Activated T-helper 2 cell treated with anti-CD3 and anti-CD28 coated beads, Interferon-gamma antibody, Interleukin-2, Interleukin-4, amounts not matched to agents 10 μg/mL and 5 μg/mL and 100 μg/mL, durations not matched to agents 14 hours and 24 hours and 36 hours (primary cell): ENCODE measurements at regions of chr17 and their contacts with region 1.

Region 1: GRCh38 chr17:75515496-75516254 is at the start of gene CASKIN2:
- DNase-seq: peak; percentile 70
- H3K4me3 Mint-ChIP-seq: peak within 1 kb of the TSS; percentile 72
- H3K27ac Mint-ChIP-seq: no peak within 1 kb of the TSS
- H3K4me1 Mint-ChIP-seq: peaks cover 23% of the 10 kb centered on the region
- H3K27me3 Mint-ChIP-seq: peaks cover 5% of the 10 kb centered on the region
- total RNA-seq, gene CASKIN2: 2.2 and 2.3 TPM in 2 replicates

Region 2: DNA sequence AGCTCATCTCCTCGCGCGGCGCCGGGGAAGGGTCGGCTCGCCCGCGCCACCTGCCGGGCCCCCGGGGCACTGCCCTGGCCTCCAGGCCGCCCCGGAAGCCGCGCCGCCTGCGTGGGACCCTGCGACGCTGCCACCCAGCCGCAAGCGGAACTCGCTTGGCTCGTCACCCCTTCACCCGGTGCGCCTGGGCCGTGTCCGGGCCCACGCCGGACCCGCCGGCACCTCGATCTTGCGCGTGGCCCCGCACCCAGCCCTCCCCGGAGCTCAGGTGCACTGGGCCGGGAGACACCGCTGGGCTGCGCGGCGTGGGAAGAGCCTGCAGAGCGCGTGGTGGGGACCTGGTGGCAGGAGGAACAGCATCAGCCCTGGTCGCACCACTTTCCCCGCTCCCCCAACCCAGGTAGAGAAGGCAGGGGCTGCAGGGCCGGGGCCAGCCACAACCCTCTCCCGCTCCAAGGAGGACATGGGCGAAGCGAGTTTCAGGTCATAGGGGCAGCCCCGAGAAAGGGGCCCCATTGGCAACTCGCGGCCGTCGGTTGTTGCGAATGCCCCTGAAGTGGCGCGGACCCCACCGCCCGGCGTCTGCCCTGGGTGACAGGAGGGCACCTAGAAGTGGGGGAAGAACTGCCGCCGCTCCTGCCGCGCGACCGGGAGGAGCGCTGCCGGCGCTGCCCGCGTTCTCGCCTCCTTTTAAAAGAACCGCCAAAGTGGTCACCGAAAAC is 244.3 kb before region 1 on chr17:
- intact Hi-C with region 1: loop called (anchors 5 kb)
- DNase-seq: peak; percentile 87
- H3K4me3 Mint-ChIP-seq: peak overlapping the region; percentile 88
- H3K27ac Mint-ChIP-seq: peak overlapping the region; percentile 74
- H3K4me1 Mint-ChIP-seq: peaks cover 33% of the 10 kb centered on the region
- H3K27me3 Mint-ChIP-seq: no peaks in the 10 kb centered on the region

Region 3: GRCh38 chr17:75289115-75289831 is 226.4 kb before region 1 on chr17 and contains the start of gene SLC25A19:
- intact Hi-C with region 1: loop called (anchors 10 kb)
- DNase-seq: peak; percentile 98
- H3K4me3 Mint-ChIP-seq: peak within 1 kb of the TSS; percentile 99
- H3K27ac Mint-ChIP-seq: peak within 1 kb of the TSS; percentile 100
- H3K4me1 Mint-ChIP-seq: peaks cover 20% of the 10 kb centered on the region
- H3K27me3 Mint-ChIP-seq: no peaks in the 10 kb centered on the region
- total RNA-seq, gene SLC25A19: 97.4 and 101 TPM in 2 replicates

Region 4: GRCh38 chr17:75430159-75430974 is 85.3 kb before region 1 on chr17:
- intact Hi-C with region 1: loop called (anchors 2 kb)
- DNase-seq: no peak
- H3K4me3 Mint-ChIP-seq: no peak overlapping the region
- H3K27ac Mint-ChIP-seq: no peak overlapping the region
- H3K4me1 Mint-ChIP-seq: peaks cover 17% of the 10 kb centered on the region
- H3K27me3 Mint-ChIP-seq: peaks cover 12% of the 10 kb centered on the region

Region 5: DNA sequence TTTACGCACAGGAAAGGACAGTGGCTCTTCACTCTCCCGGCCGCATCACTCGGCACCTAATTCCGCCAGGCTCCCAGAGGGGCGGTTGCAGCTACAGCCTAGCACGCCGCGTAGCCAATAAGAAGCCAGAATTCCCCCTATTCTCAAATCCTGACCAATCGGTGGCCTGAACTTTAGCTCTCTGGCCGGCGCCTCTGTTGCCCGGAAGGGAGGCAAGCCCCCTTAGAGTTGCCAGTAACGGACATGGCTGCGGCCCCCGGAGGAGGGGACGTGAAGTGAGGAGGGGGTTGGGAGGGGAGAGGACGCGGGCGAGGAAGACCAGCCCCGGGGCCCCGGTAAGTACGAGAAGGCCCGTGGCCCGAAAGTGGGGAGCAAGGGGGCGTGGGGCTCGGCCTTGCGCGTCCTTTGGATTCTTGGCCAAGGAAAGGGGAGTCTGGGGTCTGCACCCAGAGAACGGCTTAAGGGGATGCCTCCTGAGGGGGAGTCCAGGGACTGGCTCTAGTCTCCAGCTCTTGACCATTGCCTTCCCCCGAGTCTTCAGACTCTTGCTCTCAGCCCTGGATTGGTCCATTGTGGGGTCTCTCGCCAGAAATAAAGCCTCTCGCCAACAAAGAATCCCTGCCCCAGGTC is 59.1 kb before region 1 on chr17 and contains the start of gene TMEM94:
- intact Hi-C with region 1: loop called (anchors 5 kb)
- DNase-seq: peak; percentile 88
- H3K4me3 Mint-ChIP-seq: peak within 1 kb of the TSS; percentile 94
- H3K27ac Mint-ChIP-seq: peak within 1 kb of the TSS; percentile 87
- H3K4me1 Mint-ChIP-seq: peaks cover 33% of the 10 kb centered on the region
- H3K27me3 Mint-ChIP-seq: peaks cover 2% of the 10 kb centered on the region
- total RNA-seq, gene TMEM94: 71.1 and 79.3 TPM in 2 replicates

Region 6: DNA sequence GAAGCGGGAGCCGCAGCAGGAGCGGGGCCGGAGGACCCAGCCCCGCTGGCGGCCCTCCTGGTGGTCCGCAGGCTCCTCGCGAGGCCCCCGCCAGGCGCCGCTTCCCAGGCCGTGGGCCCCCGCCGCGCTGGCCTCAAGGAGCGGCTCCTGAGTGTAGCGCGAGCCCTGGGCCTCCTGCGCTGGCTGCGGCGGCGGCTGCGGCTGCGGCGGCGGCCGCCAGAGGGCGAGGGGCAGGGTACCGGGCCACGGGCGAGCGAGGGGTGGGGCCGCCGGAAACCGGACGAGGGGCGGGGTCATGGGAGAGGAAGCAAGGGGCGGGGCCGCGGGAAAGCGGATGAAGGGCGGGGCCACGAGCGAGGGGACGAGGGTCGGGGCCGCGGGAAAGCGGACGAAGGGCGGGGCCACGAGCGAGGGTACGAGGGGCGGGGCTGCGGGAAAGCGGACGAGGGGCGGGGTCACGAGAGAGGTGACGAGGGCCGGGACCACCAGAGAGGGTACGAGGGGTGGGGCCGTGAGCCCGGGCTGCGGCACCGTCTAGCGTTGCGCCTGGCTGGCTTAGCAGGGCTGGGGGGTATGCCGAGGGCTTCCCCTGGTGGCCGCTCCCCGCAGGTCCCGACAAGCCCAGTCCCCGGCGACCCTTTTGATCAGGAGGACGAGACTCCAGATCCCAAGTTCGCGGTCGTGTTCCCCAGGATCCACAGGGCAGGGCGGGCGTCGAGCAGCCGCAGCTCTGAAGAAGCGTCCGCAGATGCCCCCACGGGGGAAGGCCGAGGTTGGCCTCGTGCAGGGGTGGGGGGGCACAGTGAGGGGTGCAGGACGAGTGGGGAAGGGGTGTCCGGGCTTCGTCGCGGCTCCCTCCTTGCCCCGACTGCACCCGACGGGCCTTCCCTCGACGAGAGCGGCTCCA is 73.6 kb after region 1 on chr17:
- intact Hi-C with region 1: loop called (anchors 1 kb)
- DNase-seq: peak; percentile 88
- H3K4me3 Mint-ChIP-seq: peak overlapping the region; percentile 72
- H3K27ac Mint-ChIP-seq: no peak overlapping the region
- H3K4me1 Mint-ChIP-seq: peaks cover 2% of the 10 kb centered on the region
- H3K27me3 Mint-ChIP-seq: peaks cover 22% of the 10 kb centered on the region

Region 7: GRCh38 chr17:75667021-75667790 is 151.5 kb after region 1 on chr17 and contains the starts of genes RECQL5 and SAP30BP:
- intact Hi-C with region 1: loop called (anchors 5 kb)
- DNase-seq: peak; percentile 98
- H3K4me3 Mint-ChIP-seq: peak within 1 kb of the TSS; percentile 73
- H3K27ac Mint-ChIP-seq: peak within 1 kb of the TSS; percentile 38
- H3K4me1 Mint-ChIP-seq: peaks cover 20% of the 10 kb centered on the region
- H3K27me3 Mint-ChIP-seq: no peaks in the 10 kb centered on the region
- total RNA-seq, gene RECQL5: 30.8 and 33.3 TPM in 2 replicates
- total RNA-seq, gene SAP30BP: 97.6 and 101 TPM in 2 replicates